ENCODE measurements at regions of chr5 and their contacts with region 1.

Region 1: DNA sequence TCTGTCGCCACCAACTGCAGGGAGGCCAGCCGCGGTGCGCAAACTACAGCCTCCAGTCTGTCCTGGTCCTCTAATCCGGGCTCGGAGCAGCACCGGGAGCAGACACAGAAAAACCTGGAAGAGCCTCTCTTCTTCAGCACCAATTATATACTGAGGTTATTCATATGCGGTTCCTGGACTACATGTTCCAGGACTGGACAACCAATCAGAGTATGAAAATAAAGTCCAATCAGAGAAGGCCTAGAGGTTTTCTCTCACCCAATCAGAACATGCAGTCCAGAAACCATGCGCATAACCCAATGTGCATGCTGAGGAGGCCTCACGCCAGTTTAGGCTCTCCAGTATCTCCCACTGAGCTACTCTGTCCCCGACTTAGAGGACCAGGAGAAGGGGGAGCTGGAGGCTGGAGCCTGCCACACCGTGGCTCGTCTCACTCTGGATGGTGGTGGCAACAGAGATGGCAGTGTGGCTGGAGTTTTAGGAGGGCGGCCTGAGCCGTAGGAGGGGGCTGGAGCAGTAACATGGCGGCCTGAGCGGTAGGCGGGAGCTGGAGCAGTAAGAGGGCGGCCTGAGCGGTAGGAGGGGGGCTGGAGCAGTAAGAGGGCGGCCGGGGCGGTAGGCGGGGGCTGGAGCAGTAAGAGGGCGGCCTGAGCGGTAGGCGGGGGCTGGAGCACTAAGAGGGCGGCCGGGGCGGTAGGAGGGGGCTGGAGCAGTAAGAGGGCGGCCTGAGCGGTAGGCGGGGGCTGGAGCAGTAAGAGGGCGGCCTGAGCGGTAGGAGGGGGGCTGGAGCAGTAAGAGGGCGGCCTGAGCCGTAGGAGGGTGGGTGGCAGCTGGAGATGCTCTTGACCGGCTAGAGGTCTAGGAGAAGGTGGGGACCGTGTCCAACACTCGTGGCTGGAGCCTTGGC is 20.4 kb upstream of the TRIM52 start:
- DNase-seq: peak; percentile 85 to 91
- H3K4me3 ChIP-seq: peak overlapping the region; percentile 54 to 93 (median 88)
- H3K27ac ChIP-seq: peak overlapping the region; percentile 93
- H3K4me1 ChIP-seq: no peaks in the 10 kb centered on the region
- H3K27me3 ChIP-seq: no peaks in the 10 kb centered on the region
- CTCF ChIP-seq: no peak
- EP300 ChIP-seq: no peak
- POLR2A ChIP-seq: peak; percentile 86 to 87
- RAD21 ChIP-seq: no peak

Region 2: DNA sequence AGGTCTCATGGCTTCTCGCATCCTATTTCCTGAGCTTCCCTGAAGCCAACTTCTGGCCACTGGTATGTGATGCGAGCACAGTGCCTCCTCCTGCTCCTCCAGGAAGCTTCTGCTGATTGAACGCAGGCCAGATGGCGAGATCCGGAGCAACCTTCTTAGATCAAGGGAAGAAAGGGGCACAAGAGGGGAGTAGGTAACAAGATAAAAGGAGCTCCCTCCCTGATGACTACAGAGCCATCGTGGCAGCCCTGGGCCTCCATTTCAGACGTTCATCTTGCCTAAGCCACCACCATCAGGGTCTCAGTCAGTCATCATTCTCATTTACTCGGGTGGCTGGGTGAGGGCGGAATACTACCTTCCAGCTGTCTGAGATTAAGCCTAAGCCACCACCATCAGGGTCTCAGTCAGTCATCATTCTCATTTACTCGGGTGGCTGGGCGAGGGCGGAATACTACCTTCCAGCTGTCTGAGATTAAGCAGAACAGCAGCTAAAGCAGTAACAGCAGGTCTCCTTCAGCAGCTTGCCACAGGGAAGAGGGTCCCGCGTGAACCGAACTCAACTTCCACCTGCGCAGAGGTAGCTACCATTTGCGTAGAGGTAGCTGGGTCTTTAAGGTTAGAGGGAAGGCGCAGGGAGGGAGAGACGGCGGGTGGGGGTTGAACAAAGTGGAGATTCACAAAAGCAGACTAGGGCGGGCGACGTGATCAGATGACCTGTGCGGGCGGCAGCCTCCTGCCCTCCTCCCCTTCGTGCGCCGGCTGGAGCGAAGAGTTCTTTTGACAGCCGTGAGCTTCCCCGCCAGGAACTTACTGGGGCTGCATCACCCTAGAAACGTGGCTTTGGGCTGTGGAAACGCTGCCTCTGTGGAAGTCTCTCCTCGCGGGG is 450.8 kb before region 1 on chr5:
- CTCF ChIA-PET with region 1: no interaction called
- POLR2A ChIA-PET with region 1: no interaction called
- DNase-seq: peak in 1 of 2 experiments; percentile 83
- H3K4me3 ChIP-seq: peak overlapping the region; percentile 69 to 84 (median 75)
- H3K27ac ChIP-seq: peak overlapping the region; percentile 50; the same call in 1 of the 2 replicates
- H3K4me1 ChIP-seq: peaks cover 0 to 11% (median under 1%) of the 10 kb centered on the region in 4 experiments; a peak in 3 of 7 replicates
- H3K27me3 ChIP-seq: peaks cover 5 to 31% (median 28%) of the 10 kb centered on the region in 4 experiments
- CTCF ChIP-seq: no peak
- EP300 ChIP-seq: no peak
- POLR2A ChIP-seq: peak in 1 of 2 experiments; percentile 64; a peak in 2 of 3 replicates
- RAD21 ChIP-seq: no peak

Region 3: GRCh38 chr5:181260387-181261319 is 20.7 kb before region 1 on chr5 and contains the start of gene TRIM52:
- CTCF ChIA-PET with region 1: interaction called, 3 read pairs
- POLR2A ChIA-PET with region 1: interaction called, 30 read pairs
- DNase-seq: peak; percentile 83 to 94
- H3K4me3 ChIP-seq: peak within 1 kb of the TSS; percentile 76 to 92 (median 86)
- H3K27ac ChIP-seq: peak within 1 kb of the TSS; percentile 44; the same call in 1 of the 2 replicates
- H3K4me1 ChIP-seq: peaks cover 4 to 10% (median 6%) of the 10 kb centered on the region in 4 experiments; a peak in 6 of 7 replicates
- H3K27me3 ChIP-seq: peaks cover 0 to 1% (median 0%) of the 10 kb centered on the region in 4 experiments; a peak in 1 of 7 replicates
- CTCF ChIP-seq: peak in 1 of 3 experiments; percentile 15; a peak in 1 of 4 replicates
- EP300 ChIP-seq: peak in 1 of 2 experiments; percentile 23; a peak in 1 of 3 replicates
- POLR2A ChIP-seq: peak in 1 of 2 experiments; percentile 81; a peak in 2 of 3 replicates
- RAD21 ChIP-seq: no peak; a peak in 1 of 4 replicates
- total RNA-seq, gene TRIM52: 5.7 and 6.2 TPM in 2 replicates